CD4-positive, alpha-beta memory T cell (primary cell): ENCODE measurements at regions of chr7 and their contacts with region 1.

Region 1: DNA sequence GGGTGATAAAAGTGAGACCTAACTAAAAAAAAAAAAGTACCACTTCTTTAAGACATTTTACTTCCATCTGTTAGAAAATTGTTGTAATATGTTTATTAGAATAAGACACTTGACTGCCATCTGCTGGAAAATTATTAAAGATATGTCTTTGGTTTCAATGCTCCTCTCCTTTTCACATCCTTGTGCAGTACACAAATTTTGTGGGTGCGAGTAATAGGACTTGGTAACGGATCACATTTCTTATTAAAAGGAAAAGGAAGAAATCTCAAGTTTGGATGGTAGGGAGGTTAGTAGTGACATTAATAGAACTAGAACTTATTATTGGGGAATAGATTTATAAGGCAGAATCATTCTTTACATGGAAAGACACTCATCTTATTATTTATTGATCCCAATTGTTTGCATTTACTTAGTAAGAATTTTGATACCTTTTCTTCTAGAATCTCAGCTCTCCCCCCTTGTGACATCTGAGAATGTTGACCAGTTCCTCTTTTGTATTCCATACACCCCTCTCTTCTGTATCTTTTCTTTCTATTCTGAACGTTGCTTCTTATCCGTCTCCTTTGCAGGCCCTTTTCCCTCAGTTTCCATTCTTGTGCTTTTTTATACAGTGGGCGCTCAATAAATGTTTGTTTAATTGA is 43.1 kb upstream of the RPA3 start:
- DNase-seq: peak in 4 of 5 donors; percentile 46 to 56 (median 49)
- H3K4me3 ChIP-seq: peak overlapping the region; percentile 4 to 75
- H3K4me3 Mint-ChIP-seq: peak overlapping the region; percentile 81 to 98 (median 92)
- H3K27ac ChIP-seq: peak overlapping the region; percentile 67
- H3K27ac Mint-ChIP-seq: peak overlapping the region; percentile 89 to 98 (median 95)
- H3K4me1 ChIP-seq: peaks cover 35% of the 10 kb centered on the region
- H3K4me1 Mint-ChIP-seq: peaks cover 35 to 40% (median 39%) of the 10 kb centered on the region in 4 donors
- H3K27me3 ChIP-seq: no peaks in the 10 kb centered on the region
- H3K27me3 Mint-ChIP-seq: no peaks in the 10 kb centered on the region

Region 2: DNA sequence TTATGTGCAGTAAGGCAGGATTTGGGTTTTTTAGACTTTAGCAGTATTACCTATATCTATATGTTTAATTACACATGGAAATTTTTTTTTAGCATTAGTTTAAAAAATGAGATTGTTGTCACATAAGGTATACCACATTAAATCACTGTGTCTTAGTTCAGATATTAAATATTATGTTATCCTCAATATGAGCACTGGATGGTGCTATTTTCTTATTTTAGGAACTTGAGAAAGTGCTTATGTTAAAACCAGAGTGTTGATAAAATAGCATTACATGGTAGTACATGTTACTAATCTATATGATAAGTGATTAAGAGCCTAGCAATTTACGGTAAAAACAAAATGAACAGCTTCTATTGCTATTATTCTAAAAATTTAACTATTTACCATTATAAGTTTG is 166.0 kb before region 1 on chr7:
- CTCF ChIA-PET with region 1: interaction called, 3 read pairs
- POLR2A ChIA-PET with region 1: no interaction called
- intact Hi-C with region 1: loop called (anchors 1 kb)
- DNase-seq: peak in 4 of 5 donors; percentile 30 to 36 (median 34)
- H3K4me3 ChIP-seq: no peak overlapping the region
- H3K4me3 Mint-ChIP-seq: no peak overlapping the region
- H3K27ac ChIP-seq: no peak overlapping the region
- H3K27ac Mint-ChIP-seq: no peak overlapping the region
- H3K4me1 ChIP-seq: no peaks in the 10 kb centered on the region
- H3K4me1 Mint-ChIP-seq: no peaks in the 10 kb centered on the region
- H3K27me3 ChIP-seq: no peaks in the 10 kb centered on the region
- H3K27me3 Mint-ChIP-seq: no peaks in the 10 kb centered on the region

Region 3: GRCh38 chr7:7772397-7772821 is 10.9 kb after region 1 on chr7:
- CTCF ChIA-PET with region 1: interaction called, 12 read pairs
- POLR2A ChIA-PET with region 1: interaction called, 4 read pairs
- intact Hi-C with region 1: no loop called
- DNase-seq: no peak
- H3K4me3 ChIP-seq: no peak overlapping the region
- H3K4me3 Mint-ChIP-seq: peak overlapping the region; percentile 57 to 89 (median 83)
- H3K27ac ChIP-seq: no peak overlapping the region
- H3K27ac Mint-ChIP-seq: peak overlapping the region in 6 of 7 donors; percentile 39 to 79 (median 66)
- H3K4me1 ChIP-seq: peaks cover 11% of the 10 kb centered on the region
- H3K4me1 Mint-ChIP-seq: peaks cover 11 to 28% (median 19%) of the 10 kb centered on the region in 4 donors
- H3K27me3 ChIP-seq: no peaks in the 10 kb centered on the region
- H3K27me3 Mint-ChIP-seq: no peaks in the 10 kb centered on the region

Region 4: GRCh38 chr7:7821517-7821916 is 60.1 kb after region 1 on chr7:
- CTCF ChIA-PET with region 1: no interaction called
- POLR2A ChIA-PET with region 1: no interaction called
- intact Hi-C with region 1: no loop called
- DNase-seq: no peak
- H3K4me3 ChIP-seq: no peak overlapping the region
- H3K4me3 Mint-ChIP-seq: no peak overlapping the region
- H3K27ac ChIP-seq: no peak overlapping the region
- H3K27ac Mint-ChIP-seq: peak overlapping the region in 1 of 7 donors; percentile 19
- H3K4me1 ChIP-seq: peaks cover 16% of the 10 kb centered on the region
- H3K4me1 Mint-ChIP-seq: peaks cover 15 to 21% (median 19%) of the 10 kb centered on the region in 4 donors
- H3K27me3 ChIP-seq: no peaks in the 10 kb centered on the region
- H3K27me3 Mint-ChIP-seq: no peaks in the 10 kb centered on the region

Region 5: GRCh38 chr7:7834761-7835160 is 73.3 kb after region 1 on chr7:
- CTCF ChIA-PET with region 1: no interaction called
- POLR2A ChIA-PET with region 1: no interaction called
- intact Hi-C with region 1: no loop called
- DNase-seq: no peak
- H3K4me3 ChIP-seq: no peak overlapping the region
- H3K4me3 Mint-ChIP-seq: no peak overlapping the region
- H3K27ac ChIP-seq: no peak overlapping the region
- H3K27ac Mint-ChIP-seq: no peak overlapping the region
- H3K4me1 ChIP-seq: peaks cover 7% of the 10 kb centered on the region
- H3K4me1 Mint-ChIP-seq: peaks cover 7 to 12% (median 12%) of the 10 kb centered on the region in 4 donors
- H3K27me3 ChIP-seq: no peaks in the 10 kb centered on the region
- H3K27me3 Mint-ChIP-seq: no peaks in the 10 kb centered on the region

Region 6: GRCh38 chr7:8668627-8669500 is 907.4 kb after region 1 on chr7:
- CTCF ChIA-PET with region 1: no interaction called
- POLR2A ChIA-PET with region 1: no interaction called
- intact Hi-C with region 1: no loop called
- DNase-seq: no peak
- H3K4me3 ChIP-seq: no peak overlapping the region
- H3K4me3 Mint-ChIP-seq: no peak overlapping the region
- H3K27ac ChIP-seq: no peak overlapping the region
- H3K27ac Mint-ChIP-seq: no peak overlapping the region
- H3K4me1 ChIP-seq: no peaks in the 10 kb centered on the region
- H3K4me1 Mint-ChIP-seq: no peaks in the 10 kb centered on the region
- H3K27me3 ChIP-seq: no peaks in the 10 kb centered on the region
- H3K27me3 Mint-ChIP-seq: no peaks in the 10 kb centered on the region